CD8-positive, alpha-beta T cell (primary cell): ENCODE measurements at regions of chr6 and their contacts with region 1.

Region 1: DNA sequence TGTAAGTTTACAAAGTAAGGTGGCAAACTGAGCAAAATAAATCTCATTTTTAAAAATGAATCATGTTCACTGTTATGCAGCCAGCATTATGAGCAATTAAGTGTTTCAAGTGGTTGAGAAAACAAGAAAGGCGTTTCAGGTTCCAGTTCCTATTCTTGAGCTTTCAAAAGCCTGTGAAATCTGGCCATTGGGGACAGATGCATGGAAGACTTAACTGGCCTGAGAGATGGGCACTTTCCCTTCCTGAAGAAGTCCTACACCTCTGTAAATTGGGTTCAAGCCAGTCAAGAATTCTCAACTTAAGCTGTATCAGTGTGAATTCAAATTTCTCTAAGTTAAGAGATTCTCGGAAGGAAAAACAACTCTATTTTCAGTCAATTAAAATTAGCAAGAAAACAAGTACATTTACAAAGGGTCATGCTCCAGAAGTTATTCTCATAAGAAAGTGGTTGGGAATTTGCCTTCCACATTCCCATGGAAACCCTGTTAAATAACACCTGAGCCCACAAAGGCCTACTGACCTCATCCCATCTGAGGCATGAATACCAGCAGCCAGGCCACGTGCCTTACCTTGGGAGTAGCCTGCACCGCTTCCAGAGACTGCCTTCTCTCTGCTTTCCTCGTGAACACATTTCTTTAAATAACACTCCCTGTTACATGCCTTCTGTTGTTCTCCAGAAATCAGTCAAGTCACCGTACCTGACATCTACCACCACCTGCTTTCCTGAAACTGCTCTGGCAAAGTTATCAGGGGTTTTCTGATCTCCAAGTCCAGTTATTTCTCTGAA is 19.4 kb downstream of the MAP3K5 start:
- DNase-seq: no peak
- ATAC-seq: no peak
- H3K4me3 ChIP-seq: no peak overlapping the region
- H3K4me3 Mint-ChIP-seq: no peak overlapping the region
- H3K27ac ChIP-seq: no peak overlapping the region
- H3K27ac Mint-ChIP-seq: peak overlapping the region; percentile 75
- H3K4me1 ChIP-seq: peaks cover 2% of the 10 kb centered on the region
- H3K4me1 Mint-ChIP-seq: peaks cover 60% of the 10 kb centered on the region
- H3K27me3 ChIP-seq: no peaks in the 10 kb centered on the region
- H3K27me3 Mint-ChIP-seq: no peaks in the 10 kb centered on the region
- CTCF ChIP-seq: no peak

Region 2: DNA sequence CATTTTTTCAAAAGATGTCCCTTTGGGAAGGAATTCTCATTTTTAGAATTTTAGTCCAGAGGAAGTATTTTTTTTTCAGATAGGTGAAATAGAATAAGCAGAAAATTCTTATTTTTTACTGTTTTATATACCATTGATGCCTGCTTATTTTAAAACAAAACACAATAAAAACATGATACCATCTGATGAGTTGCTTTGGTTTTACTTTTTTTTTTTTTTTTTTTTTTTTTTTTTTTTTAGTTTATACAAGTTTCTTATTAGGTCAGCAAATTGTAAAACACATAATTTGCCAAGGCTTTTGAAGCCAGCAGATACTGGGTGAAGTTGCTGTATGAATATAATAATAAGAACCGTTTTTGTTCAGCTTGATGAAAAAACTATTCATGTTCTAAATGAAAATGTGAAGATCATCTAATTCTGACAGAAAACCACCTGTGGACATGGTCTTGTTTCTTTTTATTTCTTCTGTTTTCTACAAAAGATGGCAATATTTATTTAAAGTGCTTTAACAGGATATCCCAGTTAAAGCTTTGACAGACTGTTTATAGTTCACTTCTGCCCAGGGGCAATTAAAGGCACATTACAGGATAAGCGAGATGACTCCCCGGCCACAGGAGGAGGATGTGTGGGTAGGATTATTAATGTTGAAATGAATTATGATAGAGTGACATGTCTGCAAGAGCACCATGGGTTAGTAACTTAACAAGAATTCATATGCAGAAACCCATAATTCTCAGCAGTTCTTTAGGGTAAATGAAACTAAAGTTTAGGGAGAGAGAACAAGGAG is 1560.7 kb before region 1 on chr6:
- CTCF ChIA-PET with region 1: no interaction called
- POLR2A ChIA-PET with region 1: no interaction called
- intact Hi-C with region 1: no loop called
- DNase-seq: peak in 2 of 9 experiments; percentile 4 to 14
- ATAC-seq: no peak
- H3K4me3 ChIP-seq: no peak overlapping the region
- H3K4me3 Mint-ChIP-seq: peak overlapping the region; percentile 54
- H3K27ac ChIP-seq: no peak overlapping the region
- H3K27ac Mint-ChIP-seq: peak overlapping the region; percentile 64
- H3K4me1 ChIP-seq: peaks cover 35% of the 10 kb centered on the region
- H3K4me1 Mint-ChIP-seq: peaks cover 35% of the 10 kb centered on the region
- H3K27me3 ChIP-seq: no peaks in the 10 kb centered on the region
- H3K27me3 Mint-ChIP-seq: no peaks in the 10 kb centered on the region
- CTCF ChIP-seq: no peak

Region 3: DNA sequence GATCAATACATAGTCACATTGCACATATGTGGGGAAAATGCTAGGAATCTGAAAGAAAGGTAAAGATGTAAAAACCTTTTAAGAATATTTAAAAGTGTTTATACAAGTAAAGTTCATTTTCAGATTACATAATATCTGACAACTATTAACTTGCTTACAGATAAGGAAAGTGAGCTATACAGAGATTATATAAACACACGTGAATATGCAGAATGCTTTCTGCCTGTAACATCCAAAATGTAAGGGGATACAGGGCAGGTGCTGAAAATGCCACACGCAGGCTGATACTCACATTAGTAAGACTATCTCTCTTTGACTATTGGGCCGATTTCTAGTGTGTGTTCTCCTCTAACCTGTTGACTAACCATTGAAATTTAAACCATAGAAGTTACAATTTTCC is 204.8 kb before region 1 on chr6:
- CTCF ChIA-PET with region 1: no interaction called
- POLR2A ChIA-PET with region 1: no interaction called
- intact Hi-C with region 1: no loop called
- DNase-seq: no peak
- ATAC-seq: no peak
- H3K4me3 ChIP-seq: no peak overlapping the region
- H3K4me3 Mint-ChIP-seq: no peak overlapping the region
- H3K27ac ChIP-seq: no peak overlapping the region
- H3K27ac Mint-ChIP-seq: no peak overlapping the region
- H3K4me1 ChIP-seq: no peaks in the 10 kb centered on the region
- H3K4me1 Mint-ChIP-seq: peaks cover 8% of the 10 kb centered on the region
- H3K27me3 ChIP-seq: no peaks in the 10 kb centered on the region
- H3K27me3 Mint-ChIP-seq: no peaks in the 10 kb centered on the region
- CTCF ChIP-seq: no peak

Region 4: DNA sequence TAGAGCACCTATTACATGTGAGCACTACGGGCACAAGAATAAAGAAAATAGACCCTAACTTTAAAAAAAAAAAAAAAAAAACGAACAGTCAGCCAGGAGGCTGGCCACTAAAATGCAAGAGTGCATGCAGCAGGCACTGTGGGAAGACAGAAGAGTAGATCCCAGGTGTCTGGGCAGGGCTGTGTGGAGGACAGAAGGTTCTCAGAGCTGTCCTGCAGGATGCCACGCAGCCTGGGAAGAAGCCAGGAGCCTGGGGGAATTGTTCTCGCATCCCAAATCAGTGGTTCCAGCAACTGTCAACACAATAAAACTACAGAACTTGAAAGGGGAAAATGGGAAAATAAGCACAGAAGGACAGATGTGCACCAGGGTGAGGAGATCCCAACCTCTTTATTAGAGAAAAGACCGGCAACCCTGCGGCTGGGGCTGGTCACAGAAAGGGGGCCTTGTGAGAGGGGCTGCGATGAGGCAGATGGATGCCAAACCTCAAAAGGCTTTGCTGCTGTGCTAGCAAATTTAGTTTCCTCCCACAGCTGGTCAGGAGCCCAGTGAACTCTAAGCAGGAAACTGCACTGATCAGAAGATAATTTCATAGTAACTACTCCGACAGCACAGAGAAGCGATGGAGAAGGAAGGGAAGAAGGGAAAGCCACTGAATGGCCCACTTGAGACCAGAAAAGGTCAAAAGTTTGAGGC is 11.5 kb before region 1 on chr6:
- CTCF ChIA-PET with region 1: no interaction called
- POLR2A ChIA-PET with region 1: interaction called, 4 read pairs
- intact Hi-C with region 1: loop called (anchors 2 kb)
- DNase-seq: peak in 6 of 9 experiments; percentile 10 to 60 (median 39)
- ATAC-seq: peak; percentile 51
- H3K4me3 ChIP-seq: peak overlapping the region in 1 of 2 experiments; percentile 27
- H3K4me3 Mint-ChIP-seq: peak overlapping the region; percentile 78
- H3K27ac ChIP-seq: peak overlapping the region in 1 of 2 experiments; percentile 69
- H3K27ac Mint-ChIP-seq: peak overlapping the region; percentile 93
- H3K4me1 ChIP-seq: peaks cover 46% of the 10 kb centered on the region
- H3K4me1 Mint-ChIP-seq: peaks cover 66% of the 10 kb centered on the region
- H3K27me3 ChIP-seq: no peaks in the 10 kb centered on the region
- H3K27me3 Mint-ChIP-seq: no peaks in the 10 kb centered on the region
- CTCF ChIP-seq: no peak

Region 5: GRCh38 chr6:136831873-136832562 is 59.1 kb after region 1 on chr6:
- CTCF ChIA-PET with region 1: no interaction called
- POLR2A ChIA-PET with region 1: no interaction called
- intact Hi-C with region 1: no loop called
- DNase-seq: no peak
- ATAC-seq: no peak
- H3K4me3 ChIP-seq: no peak overlapping the region
- H3K4me3 Mint-ChIP-seq: no peak overlapping the region
- H3K27ac ChIP-seq: no peak overlapping the region
- H3K27ac Mint-ChIP-seq: no peak overlapping the region
- H3K4me1 ChIP-seq: no peaks in the 10 kb centered on the region
- H3K4me1 Mint-ChIP-seq: peaks cover 2% of the 10 kb centered on the region
- H3K27me3 ChIP-seq: no peaks in the 10 kb centered on the region
- H3K27me3 Mint-ChIP-seq: no peaks in the 10 kb centered on the region
- CTCF ChIP-seq: no peak